Heart right ventricle (tissue), 16 donors: ENCODE measurements at regions of chr5 and their contacts with region 1.

Region 1: DNA sequence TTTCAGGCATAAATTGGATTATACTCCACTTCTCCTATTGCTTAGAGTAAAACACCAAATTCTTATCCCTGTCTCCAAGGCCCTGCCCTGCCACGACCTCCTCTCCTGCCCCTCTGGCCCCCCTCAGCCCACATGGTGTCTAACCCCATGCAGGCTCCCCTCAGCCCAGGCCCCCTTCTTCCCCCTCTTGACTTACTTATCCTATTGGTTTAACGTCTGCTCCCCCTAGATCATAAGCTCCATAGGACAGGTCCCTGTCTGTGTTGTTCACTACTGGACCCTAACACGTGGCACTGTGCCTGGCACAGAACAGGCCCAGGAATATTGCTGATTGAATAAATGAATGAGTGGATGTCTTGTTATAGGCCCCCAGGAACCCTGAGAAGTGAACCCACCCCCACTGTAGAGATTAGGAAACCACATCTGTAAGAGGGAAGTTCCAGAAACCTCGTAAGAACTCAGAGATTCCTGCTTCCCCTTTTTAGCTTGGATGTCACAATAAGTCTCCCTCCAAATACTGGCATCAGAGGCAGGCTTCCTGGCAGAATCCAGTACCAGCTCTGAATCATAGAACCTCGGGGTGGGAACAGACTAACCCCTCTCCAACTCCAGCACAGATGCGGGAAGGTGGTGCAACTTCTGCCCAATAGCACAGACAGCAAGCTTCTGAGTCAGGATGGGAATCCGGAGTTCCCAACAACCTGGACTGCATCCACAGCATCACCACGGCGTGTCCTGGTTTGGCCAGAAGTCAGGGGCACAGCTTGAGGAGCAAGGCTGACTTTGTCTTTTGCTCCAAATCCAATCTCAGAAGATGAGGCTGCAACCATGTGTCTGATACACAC is 31.5 kb downstream of the HRH2 start:
- DNase-seq: peak in 1 of 2 donors; percentile 25
- ATAC-seq: peak in 5 of 8 donors; percentile 26 to 78 (median 27)
- H3K4me3 ChIP-seq: no peak overlapping the region
- H3K27ac ChIP-seq: peak overlapping the region; percentile 16 to 91 (median 76)
- H3K4me1 ChIP-seq: peaks cover 15 to 95% (median 57%) of the 10 kb centered on the region in 9 donors
- H3K27me3 ChIP-seq: no peaks in the 10 kb centered on the region
- CTCF ChIP-seq: no peak

Region 2: DNA sequence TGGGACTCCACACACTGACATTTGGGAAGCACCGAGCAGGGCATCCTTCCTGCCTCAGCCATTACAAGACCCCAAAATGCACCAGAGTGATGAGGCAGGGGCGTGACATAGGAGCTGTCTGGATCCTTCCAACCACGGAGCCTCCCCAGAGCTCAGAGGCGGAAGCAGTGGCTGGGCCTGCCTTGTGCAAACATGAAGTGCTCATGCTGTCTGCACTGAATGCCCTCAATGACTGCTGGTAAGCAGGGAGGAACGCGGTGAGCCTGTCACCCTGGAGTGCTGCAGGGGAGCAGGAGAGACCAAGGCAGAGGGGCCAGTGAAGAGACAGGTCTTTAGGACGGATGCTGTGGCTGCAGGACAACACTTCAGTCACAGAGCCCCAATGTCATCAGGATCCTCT is 91.7 kb before region 1 on chr5:
- intact Hi-C with region 1: loop called in 1 of 10 experiments (anchors 1 kb)
- DNase-seq: no peak
- ATAC-seq: peak in 6 of 8 donors; percentile 34 to 71 (median 52)
- H3K4me3 ChIP-seq: no peak overlapping the region
- H3K27ac ChIP-seq: peak overlapping the region in 9 of 10 donors; percentile 49 to 91 (median 84)
- H3K4me1 ChIP-seq: peaks cover 0 to 9% (median 5%) of the 10 kb centered on the region in 9 donors
- H3K27me3 ChIP-seq: peaks cover 0 to 16% (median 0%) of the 10 kb centered on the region in 7 donors
- CTCF ChIP-seq: no peak